Esophagus muscularis mucosa (tissue), 4 donors: ENCODE measurements at regions of chr5 and their contacts with region 1.

Region 1: GRCh38 chr5:142215915-142216681 is 107.5 kb downstream of the NDFIP1 start:
- DNase-seq: no peak
- H3K4me3 ChIP-seq: peak overlapping the region; percentile 31 to 43 (median 34)
- H3K27ac ChIP-seq: peak overlapping the region; percentile 71 to 82 (median 76)
- H3K4me1 ChIP-seq: peaks cover 14 to 20% (median 16%) of the 10 kb centered on the region in 4 donors
- H3K27me3 ChIP-seq: no peaks in the 10 kb centered on the region
- CTCF ChIP-seq: no peak
- EP300 ChIP-seq: no peak
- POLR2A ChIP-seq: no peak

Region 2: GRCh38 chr5:142115937-142116614 is 100.0 kb before region 1 on chr5:
- intact Hi-C with region 1: no loop called
- DNase-seq: no peak
- H3K4me3 ChIP-seq: no peak overlapping the region
- H3K27ac ChIP-seq: no peak overlapping the region
- H3K4me1 ChIP-seq: peaks cover 59 to 90% (median 72%) of the 10 kb centered on the region in 4 donors
- H3K27me3 ChIP-seq: no peaks in the 10 kb centered on the region
- CTCF ChIP-seq: no peak
- EP300 ChIP-seq: no peak
- POLR2A ChIP-seq: no peak

Region 3: GRCh38 chr5:142145106-142145900 is 70.8 kb before region 1 on chr5:
- intact Hi-C with region 1: no loop called
- DNase-seq: no peak
- H3K4me3 ChIP-seq: no peak overlapping the region
- H3K27ac ChIP-seq: peak overlapping the region in 1 of 4 donors; percentile 15
- H3K4me1 ChIP-seq: peaks cover 0 to 7% (median 2%) of the 10 kb centered on the region in 4 donors
- H3K27me3 ChIP-seq: no peaks in the 10 kb centered on the region
- CTCF ChIP-seq: peak; percentile 57 to 73 (median 60)
- EP300 ChIP-seq: no peak
- POLR2A ChIP-seq: no peak

Region 4: DNA sequence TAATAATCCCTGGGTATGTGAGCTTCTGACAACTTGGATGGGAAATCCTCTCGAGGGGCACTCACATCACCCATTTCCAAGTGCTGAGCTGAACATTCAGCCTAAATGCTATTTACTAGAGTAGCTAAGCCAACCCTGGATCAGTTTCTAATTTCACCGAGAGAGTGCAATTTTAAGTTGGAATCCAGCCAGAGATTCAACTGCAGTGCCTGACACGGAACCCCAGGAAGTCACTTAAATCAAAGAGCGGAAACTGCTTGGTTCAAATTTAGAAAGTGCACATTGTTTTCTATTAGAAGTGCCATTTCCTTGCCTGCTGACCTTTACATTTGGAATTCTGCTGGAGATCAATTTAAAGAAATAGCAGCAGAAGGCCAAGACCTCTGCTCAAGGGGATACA is 100.0 kb after region 1 on chr5:
- intact Hi-C with region 1: loop called (anchors 10 kb)
- DNase-seq: no peak
- H3K4me3 ChIP-seq: no peak overlapping the region
- H3K27ac ChIP-seq: peak overlapping the region in 1 of 4 donors; percentile 35
- H3K4me1 ChIP-seq: peaks cover 58 to 83% (median 79%) of the 10 kb centered on the region in 4 donors
- H3K27me3 ChIP-seq: no peaks in the 10 kb centered on the region
- CTCF ChIP-seq: no peak
- EP300 ChIP-seq: no peak
- POLR2A ChIP-seq: no peak